ENCODE measurements at regions of chr4 and their contacts with region 1.

Region 1: DNA sequence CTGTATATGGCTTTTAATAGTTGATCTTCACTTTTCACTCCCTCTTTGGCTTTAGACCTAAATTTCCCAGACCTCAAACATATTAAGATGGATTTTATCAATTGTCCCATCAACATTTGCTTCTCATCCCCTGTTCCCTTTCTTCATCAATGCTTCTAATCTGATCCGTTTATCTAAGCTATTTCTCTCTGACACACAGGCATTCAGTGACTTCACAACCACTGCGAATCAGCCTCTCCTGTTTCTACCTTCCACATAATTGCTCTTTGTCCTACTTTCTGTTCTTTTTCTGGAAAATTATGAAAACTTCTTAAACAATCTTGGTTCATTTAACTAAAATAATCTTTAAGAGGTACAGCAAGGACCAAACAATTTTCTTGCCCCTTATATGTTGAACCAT is 115.2 kb downstream of the GLRA3 start:
- DNase-seq: no peak

Region 2: DNA sequence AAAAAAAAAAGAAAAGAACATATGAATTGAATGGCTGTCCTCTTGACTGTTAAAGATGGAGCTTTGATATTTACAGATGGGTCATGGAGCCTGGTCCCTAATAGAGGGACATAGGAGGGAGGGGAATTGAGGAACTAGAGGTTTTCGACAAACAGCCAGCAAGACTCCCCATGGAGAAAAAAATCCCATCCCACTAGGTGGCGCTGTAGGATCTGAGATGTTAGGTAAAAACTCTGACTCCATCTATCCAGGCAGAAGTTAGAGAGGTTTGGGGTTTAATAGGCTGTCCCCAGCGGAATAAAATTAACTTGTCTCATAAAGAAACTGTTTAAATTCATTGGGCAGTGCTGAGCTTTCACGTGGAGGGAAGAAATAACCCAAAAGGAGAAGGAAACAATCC is 1425.5 kb before region 1 on chr4:
- intact Hi-C with region 1: no loop called
- DNase-seq: no peak

Region 3: GRCh38 chr4:174697896-174698295 is 15.9 kb before region 1 on chr4:
- intact Hi-C with region 1: loop called in 1 of 2 experiments (anchors 2 kb)
- DNase-seq: no peak

Measured in posterior vena cava (tissue), 2 donors.